PC-9 (cell line): ENCODE measurements at regions of chrX and their contacts with region 1.

Region 1: DNA sequence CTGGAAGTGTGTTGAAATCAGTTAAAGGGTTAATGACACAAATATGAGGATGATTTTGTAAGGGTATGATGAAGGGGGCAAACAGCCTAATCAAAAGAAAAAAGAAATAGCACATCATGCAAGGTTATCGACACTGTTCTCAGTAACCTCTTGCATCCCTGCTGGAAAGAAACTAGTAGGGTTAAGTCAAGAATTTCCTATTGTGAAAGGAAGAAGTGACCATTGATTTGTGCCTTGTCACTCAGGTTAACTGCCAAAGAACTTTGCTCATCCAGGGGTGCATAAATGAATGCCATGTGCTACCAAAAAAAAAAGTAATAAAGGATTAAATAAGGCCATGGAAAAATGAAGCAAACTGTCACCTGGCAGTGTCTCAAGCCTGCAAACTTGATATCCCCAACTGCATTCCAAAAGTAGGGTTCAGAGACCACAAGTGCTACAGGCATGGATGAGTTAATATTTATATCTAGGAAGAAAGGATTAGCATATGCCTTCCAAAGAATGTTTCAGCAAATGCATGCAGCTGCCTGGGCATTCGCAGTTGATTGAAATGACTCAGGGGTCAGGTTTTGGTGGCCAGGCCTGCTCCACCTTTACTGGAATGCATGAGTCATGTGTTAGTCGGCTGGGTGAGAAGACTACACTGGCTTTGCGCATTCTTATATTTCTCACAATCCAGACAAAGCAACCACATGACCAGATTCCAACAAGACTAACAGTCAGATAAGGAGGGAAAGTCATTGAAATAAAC is 78.4 kb upstream of the ATXN3L start:
- DNase-seq: peak; percentile 84 to 98
- H3K4me3 ChIP-seq: no peak overlapping the region
- H3K27ac ChIP-seq: peak overlapping the region; percentile 99
- H3K4me1 ChIP-seq: peaks cover 39% of the 10 kb centered on the region
- H3K27me3 ChIP-seq: no peaks in the 10 kb centered on the region
- CTCF ChIP-seq: no peak

Region 2: DNA sequence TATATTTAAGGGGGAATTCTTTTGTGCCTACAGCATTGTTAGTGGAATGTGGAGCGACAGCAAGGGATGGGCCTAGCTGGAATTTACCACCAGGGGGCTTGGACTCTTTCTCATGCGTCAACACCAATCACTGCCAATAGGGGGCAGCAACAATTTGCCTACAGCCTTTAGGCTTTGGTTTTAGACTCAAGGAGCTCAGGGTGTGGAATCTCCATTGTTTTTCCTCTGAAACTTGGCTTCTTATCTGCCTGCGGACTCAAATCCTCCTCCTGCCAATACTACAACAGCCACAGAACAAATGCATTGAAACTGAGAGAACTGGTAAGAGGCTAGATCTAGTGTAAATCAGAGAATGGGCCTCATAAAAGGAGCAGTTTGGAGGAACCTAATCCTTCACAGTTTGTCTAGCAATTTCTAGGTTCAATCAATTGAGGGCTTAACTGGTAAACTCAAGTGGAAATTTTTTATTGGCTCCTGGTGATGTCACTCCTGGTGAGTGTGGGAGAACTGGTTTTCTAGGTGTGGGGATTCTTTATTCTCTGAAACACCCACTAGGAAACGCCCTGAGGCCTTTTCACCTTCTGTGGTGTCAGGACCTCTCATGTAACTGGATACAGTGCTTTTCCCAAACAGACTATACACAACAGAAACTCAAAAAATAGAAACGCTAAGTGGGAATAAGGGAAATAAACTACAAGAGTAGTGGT is 451.3 kb before region 1 on chrX:
- CTCF ChIA-PET with region 1: interaction called, 3 read pairs
- POLR2A ChIA-PET with region 1: no interaction called
- intact Hi-C with region 1: loop called (anchors 1 kb)
- DNase-seq: peak; percentile 87 to 94
- H3K4me3 ChIP-seq: peak overlapping the region; percentile 40; the same call in 1 of the 2 replicates
- H3K27ac ChIP-seq: peak overlapping the region; percentile 98
- H3K4me1 ChIP-seq: peaks cover 35% of the 10 kb centered on the region
- H3K27me3 ChIP-seq: no peaks in the 10 kb centered on the region
- CTCF ChIP-seq: peak; percentile 93

Region 3: DNA sequence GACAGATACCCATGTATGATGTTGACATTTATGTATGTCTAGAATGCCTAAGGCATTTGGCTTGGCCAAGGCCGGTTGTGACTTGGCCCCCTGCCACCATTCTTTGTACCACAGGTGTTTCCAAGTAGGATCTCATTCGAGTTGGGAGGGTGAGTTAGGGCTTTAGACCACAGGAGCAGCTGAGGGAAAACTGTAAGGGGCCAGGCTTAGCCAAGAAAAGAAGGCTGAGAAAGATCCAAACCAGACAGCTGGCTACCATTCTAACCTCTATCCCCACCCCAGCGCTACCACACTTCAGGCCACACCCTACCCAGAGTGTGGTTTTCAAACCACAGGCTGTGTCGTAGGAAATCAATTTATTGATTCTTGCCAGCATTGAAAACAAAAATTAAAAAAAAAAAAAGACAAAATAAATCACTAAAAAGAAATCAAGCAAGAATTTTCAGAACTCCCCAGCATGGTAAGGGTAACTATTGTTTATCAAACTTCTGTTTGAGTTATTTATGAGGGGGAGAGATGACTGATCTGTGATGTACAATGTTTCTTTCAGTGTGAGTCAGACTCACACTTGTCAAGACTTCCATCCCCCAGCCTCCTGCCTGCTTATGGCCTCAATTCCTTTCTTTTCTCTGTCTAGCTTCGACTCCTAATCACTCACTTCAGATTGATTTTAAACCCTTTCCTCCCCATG is 413.5 kb before region 1 on chrX:
- CTCF ChIA-PET with region 1: no interaction called
- POLR2A ChIA-PET with region 1: no interaction called
- intact Hi-C with region 1: loop called (anchors 1 kb)
- DNase-seq: peak; percentile 85 to 88
- H3K4me3 ChIP-seq: peak overlapping the region; percentile 23; the same call in 1 of the 2 replicates
- H3K27ac ChIP-seq: peak overlapping the region; percentile 91
- H3K4me1 ChIP-seq: peaks cover 56% of the 10 kb centered on the region
- H3K27me3 ChIP-seq: no peaks in the 10 kb centered on the region
- CTCF ChIP-seq: no peak

Region 4: GRCh38 chrX:13194291-13195103 is 203.8 kb before region 1 on chrX:
- CTCF ChIA-PET with region 1: no interaction called
- POLR2A ChIA-PET with region 1: no interaction called
- intact Hi-C with region 1: loop called (anchors 1 kb)
- DNase-seq: peak in 1 of 2 experiments; percentile 90
- H3K4me3 ChIP-seq: peak overlapping the region; percentile 8; the same call in 1 of the 2 replicates
- H3K27ac ChIP-seq: peak overlapping the region; percentile 93
- H3K4me1 ChIP-seq: peaks cover 74% of the 10 kb centered on the region
- H3K27me3 ChIP-seq: no peaks in the 10 kb centered on the region
- CTCF ChIP-seq: no peak

Region 5: GRCh38 chrX:13334491-13334890 is 63.8 kb before region 1 on chrX:
- CTCF ChIA-PET with region 1: no interaction called
- POLR2A ChIA-PET with region 1: no interaction called
- intact Hi-C with region 1: loop called (anchors 1 kb)
- DNase-seq: peak in 1 of 2 experiments; percentile 53
- H3K4me3 ChIP-seq: no peak overlapping the region
- H3K27ac ChIP-seq: no peak overlapping the region
- H3K4me1 ChIP-seq: no peaks in the 10 kb centered on the region
- H3K27me3 ChIP-seq: no peaks in the 10 kb centered on the region
- CTCF ChIP-seq: no peak

Region 6: GRCh38 chrX:13376857-13377549 is 21.2 kb before region 1 on chrX:
- CTCF ChIA-PET with region 1: no interaction called
- POLR2A ChIA-PET with region 1: no interaction called
- intact Hi-C with region 1: no loop called
- DNase-seq: no peak
- H3K4me3 ChIP-seq: no peak overlapping the region
- H3K27ac ChIP-seq: no peak overlapping the region
- H3K4me1 ChIP-seq: peaks cover 10% of the 10 kb centered on the region; the same call in 1 of the 2 replicates
- H3K27me3 ChIP-seq: no peaks in the 10 kb centered on the region
- CTCF ChIP-seq: no peak

Region 7: GRCh38 chrX:13653022-13653693 is 254.9 kb after region 1 on chrX and contains the start of gene TCEANC:
- CTCF ChIA-PET with region 1: no interaction called
- POLR2A ChIA-PET with region 1: no interaction called
- intact Hi-C with region 1: no loop called
- DNase-seq: peak; percentile 94 to 95
- H3K4me3 ChIP-seq: peak within 1 kb of the TSS; percentile 86
- H3K27ac ChIP-seq: peak within 1 kb of the TSS; percentile 97
- H3K4me1 ChIP-seq: peaks cover 19% of the 10 kb centered on the region
- H3K27me3 ChIP-seq: no peaks in the 10 kb centered on the region
- CTCF ChIP-seq: no peak
- total RNA-seq, gene TCEANC: 0.96 and 1.2 TPM in 2 replicates